Calu3 (cell line): ENCODE measurements at regions of chr1 and their contacts with region 1.

Region 1: DNA sequence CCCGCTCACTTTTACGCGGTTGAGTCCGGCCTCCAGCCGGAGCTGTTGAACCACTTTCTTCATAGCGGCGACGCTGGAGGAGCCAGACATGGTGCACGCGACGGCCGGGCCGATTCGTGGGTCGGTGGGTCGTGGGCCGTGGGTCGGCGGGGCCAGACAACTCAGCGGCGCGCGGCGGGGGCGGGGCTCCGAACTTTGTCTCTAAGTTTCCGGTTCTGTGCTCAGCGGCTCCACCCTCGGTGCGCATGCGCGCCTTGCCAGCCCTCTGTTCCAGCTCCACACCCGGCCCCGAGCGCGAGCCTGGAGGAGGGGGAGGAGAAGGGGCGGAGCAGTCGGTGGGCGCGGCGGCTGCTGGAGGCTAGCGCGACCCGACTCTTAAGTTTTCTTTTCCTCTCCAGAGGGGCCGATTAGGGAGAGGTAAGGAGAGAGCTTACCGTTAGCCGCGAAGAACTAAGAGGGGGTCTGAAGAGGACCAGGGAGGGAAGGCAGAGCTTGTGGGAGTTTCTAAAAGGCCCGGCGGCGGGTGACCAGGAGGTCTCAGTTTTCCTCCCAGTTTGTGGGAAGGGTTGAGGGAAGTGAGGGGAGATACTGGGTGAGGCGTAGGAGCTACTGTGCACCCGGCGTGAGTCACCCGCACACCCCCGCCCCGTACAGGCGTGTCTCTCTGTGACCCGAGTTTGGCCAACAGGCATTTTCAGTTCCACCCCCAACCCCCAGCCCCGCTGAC is at the starts of genes GNG5 and SPATA1:
- DNase-seq: peak; percentile 99
- H3K4me3 Mint-ChIP-seq: peak within 1 kb of the TSS; percentile 89
- H3K27ac Mint-ChIP-seq: peak within 1 kb of the TSS; percentile 87
- H3K4me1 Mint-ChIP-seq: peaks cover 20% of the 10 kb centered on the region
- H3K27me3 Mint-ChIP-seq: no peaks in the 10 kb centered on the region
- CTCF ChIP-seq: no peak
- total RNA-seq, gene GNG5: 117 and 118 TPM in 2 replicates
- total RNA-seq, gene SPATA1: 0.52 and 0.73 TPM in 2 replicates

Region 2: GRCh38 chr1:84573967-84574842 is 68.0 kb after region 1 on chr1 and contains the start of gene CTBS:
- CTCF ChIA-PET with region 1: interaction called, 4 read pairs
- intact Hi-C with region 1: loop called (anchors 5 kb)
- DNase-seq: peak; percentile 80
- H3K4me3 Mint-ChIP-seq: peak within 1 kb of the TSS; percentile 96
- H3K27ac Mint-ChIP-seq: peak within 1 kb of the TSS; percentile 96
- H3K4me1 Mint-ChIP-seq: peaks cover 27% of the 10 kb centered on the region
- H3K27me3 Mint-ChIP-seq: no peaks in the 10 kb centered on the region
- CTCF ChIP-seq: no peak
- total RNA-seq, gene CTBS: 18.2 and 20.3 TPM in 2 replicates

Region 3: DNA sequence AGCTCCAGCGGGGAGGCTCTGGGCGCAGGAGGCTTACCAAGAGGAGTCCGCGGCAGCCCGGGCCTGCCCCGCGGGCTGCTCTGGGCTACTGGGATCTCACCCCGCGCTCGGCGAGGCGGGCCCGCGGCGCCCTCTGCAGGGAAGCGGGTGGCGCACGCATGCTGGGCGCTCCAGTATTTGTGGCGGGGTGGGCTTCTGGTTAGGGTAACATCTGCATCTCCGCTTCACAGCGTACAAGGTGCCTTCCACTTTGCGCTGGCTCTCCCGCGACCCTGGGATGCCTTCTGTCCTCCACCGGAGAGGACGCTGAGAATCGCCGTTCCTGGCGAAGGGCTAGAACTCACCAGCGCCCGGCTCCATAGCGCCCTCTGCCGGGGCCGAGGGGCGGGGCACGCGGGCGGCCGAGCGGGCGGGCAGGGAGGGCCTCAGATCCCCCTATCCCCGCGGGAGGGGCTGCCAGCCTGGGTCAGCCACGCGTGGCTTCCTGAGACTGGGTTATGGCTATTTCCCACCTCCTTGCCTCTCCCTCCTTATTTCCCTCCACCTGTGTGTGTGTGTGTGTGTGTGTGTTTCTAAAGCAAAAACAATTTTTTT is 114.7 kb after region 1 on chr1:
- CTCF ChIA-PET with region 1: interaction called, 3 read pairs
- intact Hi-C with region 1: loop called (anchors 2 kb)
- DNase-seq: peak; percentile 90
- H3K4me3 Mint-ChIP-seq: peak overlapping the region; percentile 75
- H3K27ac Mint-ChIP-seq: peak overlapping the region; percentile 32
- H3K4me1 Mint-ChIP-seq: peaks cover 14% of the 10 kb centered on the region
- H3K27me3 Mint-ChIP-seq: no peaks in the 10 kb centered on the region
- CTCF ChIP-seq: peak; percentile 97